ENCODE measurements at regions of chr10 and their contacts with region 1.

Region 1: GRCh38 chr10:87105446-87106124 is 10.6 kb downstream of the SHLD2 start:
- DNase-seq: no peak
- ATAC-seq: no peak
- H3K4me3 Mint-ChIP-seq: no peak overlapping the region
- H3K27ac Mint-ChIP-seq: no peak overlapping the region
- H3K4me1 Mint-ChIP-seq: peaks cover 4% of the 10 kb centered on the region
- H3K27me3 Mint-ChIP-seq: no peaks in the 10 kb centered on the region
- CTCF ChIP-seq: no peak

Region 2: GRCh38 chr10:87094373-87095235 is 11.0 kb before region 1 on chr10 and contains the starts of genes GLUD1 and SHLD2:
- CTCF ChIA-PET with region 1: interaction called, 3 read pairs
- POLR2A ChIA-PET with region 1: interaction called, 12 read pairs
- intact Hi-C with region 1: no loop called
- DNase-seq: peak; percentile 92
- ATAC-seq: peak; percentile 77
- H3K4me3 Mint-ChIP-seq: peak within 1 kb of the TSS; percentile 96
- H3K27ac Mint-ChIP-seq: peak within 1 kb of the TSS; percentile 96
- H3K4me1 Mint-ChIP-seq: peaks cover 48% of the 10 kb centered on the region
- H3K27me3 Mint-ChIP-seq: no peaks in the 10 kb centered on the region
- CTCF ChIP-seq: no peak
- total RNA-seq, gene GLUD1: 94.2 to 101 TPM
- total RNA-seq, gene SHLD2: 32.3 to 33.1 TPM

Measured in activated CD8-positive, alpha-beta T cell treated with anti-CD3 and anti-CD28 coated beads for 36 hours (primary cell).